ENCODE measurements at regions of chr7 and their contacts with region 1.

Region 1: GRCh38 chr7:50317221-50317678 is 12.7 kb downstream of the IKZF1 start:
- DNase-seq: peak in 7 of 9 donors; percentile 71 to 92 (median 89)
- ATAC-seq: peak; percentile 85
- H3K4me3 ChIP-seq: peak overlapping the region; percentile 73
- H3K4me3 Mint-ChIP-seq: peak overlapping the region; percentile 81 to 100 (median 94)
- H3K27ac ChIP-seq: peak overlapping the region; percentile 90
- H3K27ac Mint-ChIP-seq: peak overlapping the region in 6 of 9 donors; percentile 90 to 100 (median 99)
- H3K4me1 ChIP-seq: peaks cover 78 to 92% of the 10 kb centered on the region in 2 donors
- H3K4me1 Mint-ChIP-seq: peaks cover 0 to 100% (median 95%) of the 10 kb centered on the region in 7 donors
- H3K27me3 ChIP-seq: no peaks in the 10 kb centered on the region
- H3K27me3 Mint-ChIP-seq: no peaks in the 10 kb centered on the region

Region 2: DNA sequence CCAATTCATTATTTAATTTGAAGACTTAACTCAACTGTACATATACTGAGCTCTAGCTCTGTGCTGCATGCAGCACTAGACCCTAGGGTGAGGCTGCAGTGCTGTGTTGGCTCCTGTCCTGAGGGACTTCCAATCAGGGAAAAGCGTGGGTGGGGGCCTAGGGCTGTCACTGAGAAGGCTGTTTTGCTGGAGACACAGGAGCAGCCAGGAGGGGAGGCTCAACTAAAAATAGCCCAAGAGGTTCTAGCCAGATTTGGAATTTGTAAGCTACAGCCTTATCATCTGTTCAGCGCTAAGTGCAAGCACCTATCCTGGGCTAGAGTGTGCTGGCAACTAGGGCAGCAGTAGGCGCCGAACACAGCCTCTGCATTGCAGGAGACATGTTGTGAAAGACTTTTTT is 422.7 kb before region 1 on chr7:
- CTCF ChIA-PET with region 1: no interaction called
- POLR2A ChIA-PET with region 1: no interaction called
- intact Hi-C with region 1: no loop called
- DNase-seq: no peak
- ATAC-seq: no peak
- H3K4me3 ChIP-seq: no peak overlapping the region
- H3K4me3 Mint-ChIP-seq: no peak overlapping the region
- H3K27ac ChIP-seq: no peak overlapping the region
- H3K27ac Mint-ChIP-seq: no peak overlapping the region
- H3K4me1 ChIP-seq: no peaks in the 10 kb centered on the region
- H3K4me1 Mint-ChIP-seq: no peaks in the 10 kb centered on the region
- H3K27me3 ChIP-seq: no peaks in the 10 kb centered on the region
- H3K27me3 Mint-ChIP-seq: peaks cover 0 to 24% (median 12%) of the 10 kb centered on the region in 5 donors

Region 3: GRCh38 chr7:50125766-50126165 is 191.5 kb before region 1 on chr7:
- CTCF ChIA-PET with region 1: no interaction called
- POLR2A ChIA-PET with region 1: no interaction called
- intact Hi-C with region 1: no loop called
- DNase-seq: no peak
- ATAC-seq: no peak
- H3K4me3 ChIP-seq: no peak overlapping the region
- H3K4me3 Mint-ChIP-seq: no peak overlapping the region
- H3K27ac ChIP-seq: no peak overlapping the region
- H3K27ac Mint-ChIP-seq: no peak overlapping the region
- H3K4me1 ChIP-seq: no peaks in the 10 kb centered on the region
- H3K4me1 Mint-ChIP-seq: peaks cover 0 to 3% (median 0%) of the 10 kb centered on the region in 7 donors
- H3K27me3 ChIP-seq: no peaks in the 10 kb centered on the region
- H3K27me3 Mint-ChIP-seq: peaks cover 0 to 25% (median 0%) of the 10 kb centered on the region in 5 donors

Region 4: DNA sequence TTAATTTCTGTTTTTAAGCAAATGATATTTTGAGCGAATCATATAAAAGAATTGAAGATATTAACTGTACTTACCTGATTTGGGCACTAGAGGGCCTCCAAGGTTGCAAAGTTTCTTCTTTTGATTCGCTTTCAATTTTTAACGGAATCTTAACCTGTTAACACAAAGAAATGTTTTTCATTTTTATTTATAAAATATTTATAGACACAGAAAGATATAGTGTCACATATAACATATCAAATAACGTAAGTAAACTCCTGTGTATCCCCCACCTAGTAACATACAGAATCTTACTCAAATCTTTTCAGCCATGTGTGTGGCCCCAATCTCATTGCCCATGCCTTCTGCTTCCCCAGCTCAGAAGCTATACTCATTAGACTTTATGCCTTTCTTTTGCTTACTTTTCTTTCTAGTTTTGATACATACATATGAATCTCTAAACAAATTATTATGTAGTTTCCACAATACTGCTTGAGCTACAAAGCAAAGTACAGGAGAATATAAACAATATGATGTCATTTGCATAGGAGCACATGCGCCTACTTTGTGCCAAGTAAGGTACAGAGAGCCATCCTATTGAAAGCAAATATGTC is 174.7 kb before region 1 on chr7:
- CTCF ChIA-PET with region 1: no interaction called
- POLR2A ChIA-PET with region 1: interaction called, 4 read pairs
- intact Hi-C with region 1: loop called in 1 of 2 experiments (anchors 1 kb)
- DNase-seq: peak in 7 of 9 donors; percentile 43 to 72 (median 62)
- ATAC-seq: peak; percentile 83
- H3K4me3 ChIP-seq: no peak overlapping the region
- H3K4me3 Mint-ChIP-seq: peak overlapping the region in 9 of 10 donors; percentile 13 to 86 (median 64)
- H3K27ac ChIP-seq: peak overlapping the region; percentile 55
- H3K27ac Mint-ChIP-seq: peak overlapping the region in 8 of 9 donors; percentile 16 to 91 (median 62)
- H3K4me1 ChIP-seq: peaks cover 3% of the 10 kb centered on the region in 2 donors
- H3K4me1 Mint-ChIP-seq: peaks cover 0 to 37% (median 12%) of the 10 kb centered on the region in 7 donors
- H3K27me3 ChIP-seq: no peaks in the 10 kb centered on the region
- H3K27me3 Mint-ChIP-seq: peaks cover 0 to 18% (median 0%) of the 10 kb centered on the region in 5 donors

Region 5: GRCh38 chr7:50147951-50148808 is 169.1 kb before region 1 on chr7:
- CTCF ChIA-PET with region 1: no interaction called
- POLR2A ChIA-PET with region 1: interaction called, 4 read pairs
- intact Hi-C with region 1: loop called in 1 of 2 experiments (anchors 1 kb)
- DNase-seq: peak in 7 of 9 donors; percentile 52 to 83 (median 71)
- ATAC-seq: peak; percentile 91
- H3K4me3 ChIP-seq: no peak overlapping the region
- H3K4me3 Mint-ChIP-seq: peak overlapping the region in 8 of 10 donors; percentile 21 to 60 (median 48)
- H3K27ac ChIP-seq: peak overlapping the region; percentile 72
- H3K27ac Mint-ChIP-seq: peak overlapping the region; percentile 57 to 97 (median 87)
- H3K4me1 ChIP-seq: peaks cover 3 to 14% of the 10 kb centered on the region in 2 donors
- H3K4me1 Mint-ChIP-seq: peaks cover 18 to 63% (median 40%) of the 10 kb centered on the region in 7 donors
- H3K27me3 ChIP-seq: no peaks in the 10 kb centered on the region
- H3K27me3 Mint-ChIP-seq: no peaks in the 10 kb centered on the region

Region 6: GRCh38 chr7:50329775-50330174 is 12.5 kb after region 1 on chr7:
- CTCF ChIA-PET with region 1: interaction called, 4 read pairs
- POLR2A ChIA-PET with region 1: interaction called, 674 read pairs
- intact Hi-C with region 1: loop called (anchors 1 kb)
- DNase-seq: no peak
- ATAC-seq: peak; percentile 34
- H3K4me3 ChIP-seq: peak overlapping the region; percentile 40
- H3K4me3 Mint-ChIP-seq: peak overlapping the region in 3 of 10 donors; percentile 12 to 62 (median 20)
- H3K27ac ChIP-seq: peak overlapping the region; percentile 93
- H3K27ac Mint-ChIP-seq: no peak overlapping the region
- H3K4me1 ChIP-seq: peaks cover 84 to 90% of the 10 kb centered on the region in 2 donors
- H3K4me1 Mint-ChIP-seq: peaks cover 0 to 78% (median 43%) of the 10 kb centered on the region in 7 donors
- H3K27me3 ChIP-seq: no peaks in the 10 kb centered on the region
- H3K27me3 Mint-ChIP-seq: no peaks in the 10 kb centered on the region

Region 7: GRCh38 chr7:50335795-50336754 is 18.8 kb after region 1 on chr7:
- CTCF ChIA-PET with region 1: interaction called, 8 read pairs
- POLR2A ChIA-PET with region 1: interaction called, 2,368 read pairs
- intact Hi-C with region 1: loop called in 1 of 2 experiments (anchors 1 kb)
- DNase-seq: peak in 6 of 9 donors; percentile 54 to 86 (median 60)
- ATAC-seq: peak; percentile 62
- H3K4me3 ChIP-seq: peak overlapping the region; percentile 29
- H3K4me3 Mint-ChIP-seq: peak overlapping the region in 1 of 10 donors; percentile 90
- H3K27ac ChIP-seq: peak overlapping the region; percentile 93
- H3K27ac Mint-ChIP-seq: no peak overlapping the region
- H3K4me1 ChIP-seq: peaks cover 99% of the 10 kb centered on the region in 2 donors
- H3K4me1 Mint-ChIP-seq: peaks cover 0 to 68% (median 17%) of the 10 kb centered on the region in 7 donors
- H3K27me3 ChIP-seq: no peaks in the 10 kb centered on the region
- H3K27me3 Mint-ChIP-seq: no peaks in the 10 kb centered on the region

Region 8: DNA sequence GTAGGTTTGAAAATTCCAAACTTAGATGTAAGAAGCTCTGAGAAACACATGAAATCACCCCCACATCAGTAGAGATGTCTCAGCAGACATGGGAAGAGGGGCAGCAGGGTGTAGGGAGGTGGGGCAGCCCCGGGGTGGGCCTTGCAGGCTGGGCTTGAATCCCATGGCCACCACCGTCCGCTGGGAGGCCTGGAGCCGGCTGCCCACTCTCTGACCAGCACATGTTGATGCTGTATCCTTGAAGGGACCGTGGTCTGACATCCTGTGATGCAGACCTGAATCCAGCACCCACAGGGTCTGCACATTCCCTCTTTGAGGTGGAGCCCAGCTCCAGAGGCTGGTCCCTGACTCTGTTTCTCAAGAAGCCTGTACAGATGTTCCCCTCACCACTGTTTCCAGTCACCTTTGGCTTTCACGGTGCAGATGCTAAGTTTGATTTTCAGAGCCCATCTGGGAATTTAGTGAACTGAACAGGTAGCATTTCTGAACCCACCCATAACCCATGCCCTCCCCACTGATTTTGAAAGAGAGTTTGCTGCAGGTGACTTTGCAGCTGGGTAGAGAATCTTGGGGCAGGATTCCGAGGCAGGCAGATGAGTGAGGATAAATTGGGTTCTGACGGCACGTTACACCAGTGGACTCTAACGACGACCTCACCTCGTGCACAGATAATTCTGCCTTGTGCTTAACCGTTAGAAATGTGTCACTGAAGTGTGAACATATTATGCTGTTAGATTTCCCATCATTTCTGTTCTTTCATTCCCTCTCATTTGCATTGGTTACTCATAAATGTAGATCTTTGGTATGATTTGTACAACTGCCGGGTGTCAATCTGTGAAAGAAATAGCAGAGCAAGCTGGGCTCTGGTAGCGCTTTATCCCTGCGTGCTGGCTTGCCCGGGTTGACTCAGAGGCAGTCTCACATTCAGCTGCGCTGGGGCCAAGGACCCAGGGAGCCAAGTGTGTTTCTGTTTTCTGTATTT is 33.0 kb after region 1 on chr7:
- CTCF ChIA-PET with region 1: interaction called, 5 read pairs
- POLR2A ChIA-PET with region 1: interaction called, 2,368 read pairs
- intact Hi-C with region 1: loop called in 1 of 2 experiments (anchors 1 kb)
- DNase-seq: peak in 5 of 9 donors; percentile 55 to 77 (median 68)
- ATAC-seq: peak; percentile 51
- H3K4me3 ChIP-seq: peak overlapping the region; percentile 4
- H3K4me3 Mint-ChIP-seq: peak overlapping the region; percentile 71 to 95 (median 78)
- H3K27ac ChIP-seq: peak overlapping the region; percentile 93
- H3K27ac Mint-ChIP-seq: peak overlapping the region in 6 of 9 donors; percentile 91 to 100 (median 100)
- H3K4me1 ChIP-seq: peaks cover 96% of the 10 kb centered on the region in 2 donors
- H3K4me1 Mint-ChIP-seq: peaks cover 0 to 100% (median 97%) of the 10 kb centered on the region in 7 donors
- H3K27me3 ChIP-seq: no peaks in the 10 kb centered on the region
- H3K27me3 Mint-ChIP-seq: no peaks in the 10 kb centered on the region

Region 9: DNA sequence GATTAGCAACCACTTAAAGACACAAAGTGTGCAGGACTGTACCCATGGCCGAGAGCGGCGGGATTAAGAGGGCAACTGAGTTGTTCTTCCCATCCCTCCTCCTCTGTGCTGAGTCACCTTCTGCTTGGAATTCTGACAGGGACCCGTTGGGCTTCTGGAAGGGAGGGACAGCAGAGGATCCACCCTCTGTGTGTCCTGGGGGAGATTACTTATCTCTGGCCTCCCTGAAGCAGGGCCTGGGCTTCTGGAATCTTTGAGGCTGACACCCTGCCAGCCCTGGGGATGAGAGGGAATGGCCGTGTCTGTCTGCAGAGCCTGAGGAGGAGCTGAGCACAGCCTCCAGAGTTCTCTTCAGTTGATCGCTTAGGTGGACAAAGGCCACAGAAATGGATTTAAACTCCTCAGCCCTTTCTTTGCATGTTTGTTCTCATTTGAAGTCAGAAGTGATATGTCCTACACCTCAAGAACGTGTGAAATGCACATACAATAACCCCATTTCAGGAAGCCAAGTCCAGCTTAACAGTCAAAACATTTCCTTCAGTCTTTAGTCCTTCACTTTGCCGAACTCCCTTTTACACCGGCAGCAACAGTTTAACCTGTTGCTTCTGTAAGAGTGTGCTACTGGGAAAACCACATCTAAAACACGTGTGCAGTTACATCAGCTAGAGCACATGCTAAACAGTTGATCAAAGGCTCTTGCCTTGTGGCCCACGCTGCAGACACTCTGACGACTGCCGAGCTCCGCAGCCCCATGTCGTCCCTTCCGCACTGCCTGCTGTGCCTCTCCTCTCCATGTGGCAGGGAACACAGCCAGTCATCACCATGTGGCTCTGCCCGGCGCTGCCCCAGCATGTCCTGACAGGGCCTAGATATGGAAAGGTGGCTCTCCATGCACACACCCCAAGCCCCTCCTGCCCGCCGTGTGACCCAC is 43.0 kb after region 1 on chr7:
- CTCF ChIA-PET with region 1: interaction called, 210 read pairs
- POLR2A ChIA-PET with region 1: interaction called, 2,368 read pairs
- intact Hi-C with region 1: loop called in 1 of 2 experiments (anchors 1 kb)
- DNase-seq: peak; percentile 58 to 93 (median 88)
- ATAC-seq: peak; percentile 92
- H3K4me3 ChIP-seq: peak overlapping the region; percentile 5
- H3K4me3 Mint-ChIP-seq: peak overlapping the region; percentile 73 to 89 (median 78)
- H3K27ac ChIP-seq: peak overlapping the region; percentile 94
- H3K27ac Mint-ChIP-seq: peak overlapping the region in 6 of 9 donors; percentile 91 to 100 (median 100)
- H3K4me1 ChIP-seq: peaks cover 95 to 98% of the 10 kb centered on the region in 2 donors
- H3K4me1 Mint-ChIP-seq: peaks cover 86 to 100% (median 97%) of the 10 kb centered on the region in 7 donors
- H3K27me3 ChIP-seq: no peaks in the 10 kb centered on the region
- H3K27me3 Mint-ChIP-seq: no peaks in the 10 kb centered on the region